A673 (cell line): ENCODE measurements at regions of chr18 and their contacts with region 1.

Region 1: DNA sequence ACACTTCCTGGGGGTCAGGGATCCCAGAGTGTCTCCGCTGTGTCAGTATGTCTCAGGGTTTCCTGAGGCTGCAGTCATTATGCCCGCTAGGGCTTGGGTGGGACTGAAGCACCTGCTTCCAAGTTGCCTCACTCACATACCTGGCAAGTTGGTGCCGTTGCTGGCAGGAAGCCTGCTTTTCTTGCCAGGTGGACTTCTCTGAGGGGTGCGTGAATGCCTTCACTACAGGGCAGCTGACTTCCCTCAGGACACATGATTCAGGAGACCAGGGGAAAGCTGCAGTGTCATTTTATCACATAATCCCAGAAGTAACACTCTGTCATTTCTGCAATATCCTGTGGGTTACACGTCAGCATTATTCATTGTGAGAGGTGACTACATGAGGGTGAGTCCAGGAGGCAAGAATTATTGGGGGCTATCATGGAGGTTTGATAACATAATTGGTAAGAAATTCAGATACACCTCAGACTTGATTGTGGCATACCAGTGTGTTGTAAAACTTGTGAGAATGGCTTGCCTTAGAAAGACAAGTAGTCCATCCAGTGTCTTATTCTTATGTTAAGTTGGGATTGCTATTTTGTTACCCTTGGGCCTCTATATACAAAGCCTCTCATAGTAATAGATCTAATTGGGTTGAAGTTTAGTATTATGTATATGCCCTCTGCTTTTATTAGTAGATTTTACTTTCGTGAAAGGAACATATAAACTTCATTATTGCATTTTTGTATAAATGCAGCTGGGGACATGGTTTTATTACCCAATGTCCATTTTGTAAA is 44.1 kb downstream of the NEDD4L start:
- DNase-seq: no peak
- H3K4me3 ChIP-seq: no peak overlapping the region
- H3K27ac ChIP-seq: no peak overlapping the region
- H3K4me1 ChIP-seq: no peaks in the 10 kb centered on the region
- H3K27me3 ChIP-seq: no peaks in the 10 kb centered on the region
- CTCF ChIP-seq: no peak

Region 2: GRCh38 chr18:58109256-58109655 is 21.2 kb after region 1 on chr18:
- CTCF ChIA-PET with region 1: no interaction called
- POLR2A ChIA-PET with region 1: interaction called, 11 read pairs
- intact Hi-C with region 1: no loop called
- DNase-seq: no peak
- H3K4me3 ChIP-seq: no peak overlapping the region
- H3K27ac ChIP-seq: no peak overlapping the region
- H3K4me1 ChIP-seq: no peaks in the 10 kb centered on the region
- H3K27me3 ChIP-seq: no peaks in the 10 kb centered on the region
- CTCF ChIP-seq: no peak